Right ventricle myocardium superior (tissue), 1 donor: ENCODE measurements at regions of chr1 and their contacts with region 1.

Region 1: DNA sequence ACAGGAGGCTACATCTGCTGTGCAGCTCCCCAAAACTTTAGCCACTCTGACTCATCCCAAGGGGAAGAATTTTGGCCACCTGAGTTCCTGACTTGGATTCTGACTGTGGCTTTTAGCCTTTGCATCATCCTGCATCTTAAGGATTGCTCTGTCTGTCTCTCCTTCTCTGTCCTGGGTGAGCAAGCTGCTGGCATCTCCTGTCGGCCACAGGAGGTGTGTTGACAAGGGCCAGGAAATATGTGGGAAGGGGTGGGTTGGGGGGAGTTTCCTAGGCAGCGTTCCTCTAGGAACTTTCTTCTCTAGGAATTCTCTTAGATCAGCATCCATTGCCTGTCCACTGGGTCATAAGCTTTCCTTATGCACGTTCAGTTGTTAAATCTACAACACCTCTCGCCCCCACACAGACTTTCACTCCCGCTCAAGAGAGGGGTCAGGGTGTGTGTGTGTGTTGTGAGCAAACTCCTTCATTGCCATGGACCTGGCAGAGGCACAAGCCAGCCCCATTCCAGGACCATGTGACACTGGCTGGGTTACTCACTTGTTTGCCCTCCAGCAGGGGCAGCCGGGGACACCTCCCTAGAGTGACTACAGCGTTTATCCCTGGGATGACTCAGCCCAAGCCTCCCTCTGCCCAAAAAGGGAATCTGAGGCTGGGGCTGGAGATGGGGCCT is 145.0 kb upstream of the DUSP10 start:
- DNase-seq: peak; percentile 77
- ATAC-seq: peak; percentile 90

Region 2: DNA sequence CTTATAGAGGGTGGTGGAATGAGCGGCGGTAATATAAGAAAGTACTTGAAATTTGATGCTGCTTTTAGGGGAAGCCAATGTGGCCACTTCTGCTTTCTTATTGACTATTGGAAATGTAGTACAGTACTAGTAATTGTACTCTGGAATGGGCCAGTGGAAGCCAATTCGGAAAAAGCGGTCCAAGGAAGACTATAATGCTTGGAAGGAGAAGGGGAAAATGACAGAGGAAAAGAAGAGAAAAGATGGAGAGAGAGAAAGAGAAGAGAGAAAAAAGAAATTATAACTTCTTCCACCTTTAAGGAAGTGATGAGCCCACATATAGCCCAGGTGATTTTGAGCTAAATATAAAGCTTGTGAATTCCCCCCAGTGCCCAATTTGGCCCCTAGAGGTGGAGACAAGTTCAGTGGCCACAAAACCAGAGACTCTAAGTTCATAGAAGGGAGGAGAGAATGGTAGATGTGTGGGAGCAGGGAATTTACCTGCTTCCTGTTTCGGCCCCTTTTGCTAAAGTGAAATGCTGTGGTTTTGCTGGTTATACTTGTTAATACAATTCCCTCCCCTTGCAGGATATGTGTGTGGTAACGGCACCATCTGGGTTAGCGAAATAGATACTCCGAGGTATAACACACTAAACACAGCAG is 109.3 kb before region 1 on chr1:
- intact Hi-C with region 1: loop called (anchors 10 kb)
- DNase-seq: no peak
- ATAC-seq: no peak

Region 3: GRCh38 chr1:222009105-222009730 is 122.3 kb after region 1 on chr1:
- intact Hi-C with region 1: no loop called
- DNase-seq: no peak
- ATAC-seq: peak; percentile 71